Activated B cell treated with CpG ODN at 0.5 μM for 24 hours (primary cell): ENCODE measurements at regions of chr20 and their contacts with region 1.

Region 1: DNA sequence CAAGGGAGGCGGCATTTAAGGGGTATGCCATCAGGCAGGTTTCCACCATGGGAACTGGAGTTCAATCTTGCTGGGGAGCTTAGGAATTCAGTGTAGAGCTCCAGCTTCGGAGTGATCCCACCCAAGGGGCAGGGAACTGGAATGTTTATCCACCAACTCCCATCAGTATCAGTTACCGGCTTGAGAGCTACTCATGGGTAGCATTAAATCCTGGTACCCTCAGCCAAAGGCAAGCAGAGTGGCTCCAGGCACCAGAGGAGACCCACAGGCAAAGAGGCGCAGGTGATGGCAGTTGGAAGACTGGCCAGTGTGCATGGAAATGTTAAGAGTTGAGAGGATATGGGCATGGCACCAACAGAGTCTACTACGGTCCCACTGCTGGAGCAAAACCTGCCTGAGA is 14.1 kb downstream of the EDEM2 start:
- DNase-seq: no peak
- ATAC-seq: no peak
- H3K4me3 Mint-ChIP-seq: no peak overlapping the region
- H3K27ac Mint-ChIP-seq: no peak overlapping the region
- H3K4me1 Mint-ChIP-seq: no peaks in the 10 kb centered on the region
- H3K27me3 Mint-ChIP-seq: no peaks in the 10 kb centered on the region
- CTCF ChIP-seq: no peak

Region 2: GRCh38 chr20:34293589-34293988 is 839.4 kb before region 1 on chr20:
- CTCF ChIA-PET with region 1: no interaction called
- POLR2A ChIA-PET with region 1: no interaction called
- intact Hi-C with region 1: no loop called
- DNase-seq: no peak
- ATAC-seq: no peak
- H3K4me3 Mint-ChIP-seq: no peak overlapping the region
- H3K27ac Mint-ChIP-seq: no peak overlapping the region
- H3K4me1 Mint-ChIP-seq: no peaks in the 10 kb centered on the region
- H3K27me3 Mint-ChIP-seq: no peaks in the 10 kb centered on the region
- CTCF ChIP-seq: no peak

Region 3: GRCh38 chr20:35092524-35093266 is 40.3 kb before region 1 on chr20 and contains the start of gene TRPC4AP:
- CTCF ChIA-PET with region 1: no interaction called
- POLR2A ChIA-PET with region 1: no interaction called
- intact Hi-C with region 1: no loop called
- DNase-seq: peak; percentile 87
- ATAC-seq: peak; percentile 97
- H3K4me3 Mint-ChIP-seq: peak within 1 kb of the TSS; percentile 95
- H3K27ac Mint-ChIP-seq: peak within 1 kb of the TSS; percentile 91
- H3K4me1 Mint-ChIP-seq: peaks cover 49% of the 10 kb centered on the region
- H3K27me3 Mint-ChIP-seq: no peaks in the 10 kb centered on the region
- CTCF ChIP-seq: peak; percentile 34
- total RNA-seq, gene TRPC4AP: 58.3 and 60.2 TPM in 2 replicates

Region 4: DNA sequence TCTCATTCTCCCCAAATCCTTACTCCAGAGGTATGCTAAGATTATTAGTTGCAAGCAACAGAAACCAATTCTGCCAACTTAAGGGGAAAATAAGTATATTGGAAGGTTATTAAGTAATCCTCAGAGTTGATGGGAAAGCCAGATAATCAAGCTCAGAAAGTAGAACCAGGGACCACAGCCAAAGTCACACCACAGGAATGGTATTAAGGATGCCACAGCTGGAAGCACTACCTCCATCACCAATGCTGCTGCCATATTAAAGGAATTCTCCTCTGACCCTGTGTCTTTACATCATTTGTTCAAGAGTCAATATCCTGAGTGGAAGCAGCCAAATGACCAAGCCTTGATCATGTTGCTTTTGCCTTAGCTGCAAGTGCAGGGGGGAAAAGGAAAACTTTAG is 48.7 kb after region 1 on chr20:
- CTCF ChIA-PET with region 1: no interaction called
- POLR2A ChIA-PET with region 1: no interaction called
- intact Hi-C with region 1: no loop called
- DNase-seq: no peak
- ATAC-seq: no peak
- H3K4me3 Mint-ChIP-seq: no peak overlapping the region
- H3K27ac Mint-ChIP-seq: no peak overlapping the region
- H3K4me1 Mint-ChIP-seq: no peaks in the 10 kb centered on the region
- H3K27me3 Mint-ChIP-seq: no peaks in the 10 kb centered on the region
- CTCF ChIP-seq: no peak

Region 5: GRCh38 chr20:35248641-35249475 is 115.8 kb after region 1 on chr20:
- CTCF ChIA-PET with region 1: no interaction called
- POLR2A ChIA-PET with region 1: interaction called, 10 read pairs
- intact Hi-C with region 1: no loop called
- DNase-seq: no peak
- ATAC-seq: no peak
- H3K4me3 Mint-ChIP-seq: no peak overlapping the region
- H3K27ac Mint-ChIP-seq: no peak overlapping the region
- H3K4me1 Mint-ChIP-seq: peaks cover 23% of the 10 kb centered on the region
- H3K27me3 Mint-ChIP-seq: no peaks in the 10 kb centered on the region
- CTCF ChIP-seq: no peak

Region 6: GRCh38 chr20:36835453-36836198 is 1702.6 kb after region 1 on chr20:
- CTCF ChIA-PET with region 1: no interaction called
- POLR2A ChIA-PET with region 1: no interaction called
- intact Hi-C with region 1: no loop called
- DNase-seq: peak; percentile 72
- ATAC-seq: peak; percentile 92
- H3K4me3 Mint-ChIP-seq: peak overlapping the region; percentile 79
- H3K27ac Mint-ChIP-seq: peak overlapping the region; percentile 74
- H3K4me1 Mint-ChIP-seq: peaks cover 49% of the 10 kb centered on the region
- H3K27me3 Mint-ChIP-seq: no peaks in the 10 kb centered on the region
- CTCF ChIP-seq: no peak